Mammary epithelial cell (primary cell): ENCODE measurements at regions of chr9 and their contacts with region 1.

Region 1: GRCh38 chr9:81689343-81690190 is at the start of gene TLE1:
- DNase-seq: peak; percentile 100
- H3K4me3 ChIP-seq: peak within 1 kb of the TSS; percentile 72 to 93 (median 88)
- H3K27ac ChIP-seq: peak within 1 kb of the TSS; percentile 75
- H3K4me1 ChIP-seq: peaks cover 14% of the 10 kb centered on the region
- H3K27me3 ChIP-seq: no peaks in the 10 kb centered on the region
- CTCF ChIP-seq: no peak
- total RNA-seq, gene TLE1: 13.6 to 21.7 TPM

Region 2: GRCh38 chr9:80605129-80605528 is 1084.4 kb before region 1 on chr9:
- CTCF ChIA-PET with region 1: no interaction called
- dilution Hi-C with region 1: no loop called
- in situ Hi-C with region 1: no loop called
- intact Hi-C with region 1: loop called (anchors 5 kb)
- DNase-seq: peak; percentile 22
- H3K4me3 ChIP-seq: no peak overlapping the region
- H3K27ac ChIP-seq: no peak overlapping the region
- H3K4me1 ChIP-seq: no peaks in the 10 kb centered on the region
- H3K27me3 ChIP-seq: no peaks in the 10 kb centered on the region
- CTCF ChIP-seq: peak; percentile 27 to 49

Region 3: GRCh38 chr9:81264516-81264915 is 425.1 kb before region 1 on chr9:
- CTCF ChIA-PET with region 1: no interaction called
- dilution Hi-C with region 1: no loop called
- in situ Hi-C with region 1: no loop called
- intact Hi-C with region 1: loop called (anchors 10 kb)
- DNase-seq: no peak
- H3K4me3 ChIP-seq: no peak overlapping the region
- H3K27ac ChIP-seq: no peak overlapping the region
- H3K4me1 ChIP-seq: peaks cover 5% of the 10 kb centered on the region
- H3K27me3 ChIP-seq: peaks cover 5% of the 10 kb centered on the region
- CTCF ChIP-seq: no peak

Region 4: GRCh38 chr9:81529556-81530195 is 159.9 kb before region 1 on chr9:
- CTCF ChIA-PET with region 1: interaction called, 4 read pairs
- dilution Hi-C with region 1: loop called (anchors 25 kb)
- in situ Hi-C with region 1: loop called in 1 of 2 experiments (anchors 10 kb)
- intact Hi-C with region 1: no loop called
- DNase-seq: peak; percentile 84
- H3K4me3 ChIP-seq: no peak overlapping the region
- H3K27ac ChIP-seq: no peak overlapping the region
- H3K4me1 ChIP-seq: peaks cover 11% of the 10 kb centered on the region
- H3K27me3 ChIP-seq: no peaks in the 10 kb centered on the region
- CTCF ChIP-seq: no peak

Region 5: GRCh38 chr9:81626506-81626905 is 63.1 kb before region 1 on chr9:
- CTCF ChIA-PET with region 1: no interaction called
- dilution Hi-C with region 1: no loop called
- in situ Hi-C with region 1: no loop called
- intact Hi-C with region 1: loop called (anchors 1 kb)
- DNase-seq: peak; percentile 95
- H3K4me3 ChIP-seq: no peak overlapping the region
- H3K27ac ChIP-seq: peak overlapping the region; percentile 77
- H3K4me1 ChIP-seq: peaks cover 34% of the 10 kb centered on the region
- H3K27me3 ChIP-seq: no peaks in the 10 kb centered on the region
- CTCF ChIP-seq: no peak

Region 6: GRCh38 chr9:82488313-82489200 is 799.0 kb after region 1 on chr9:
- CTCF ChIA-PET with region 1: no interaction called
- dilution Hi-C with region 1: no loop called
- in situ Hi-C with region 1: no loop called
- intact Hi-C with region 1: loop called (anchors 1 kb)
- DNase-seq: peak; percentile 81
- H3K4me3 ChIP-seq: no peak overlapping the region
- H3K27ac ChIP-seq: peak overlapping the region; percentile 72
- H3K4me1 ChIP-seq: peaks cover 18% of the 10 kb centered on the region
- H3K27me3 ChIP-seq: no peaks in the 10 kb centered on the region
- CTCF ChIP-seq: no peak